HEK293T (cell line): ENCODE measurements at regions of chr18 and their contacts with region 1.

Region 1: GRCh38 chr18:4106407-4107033 is 348.6 kb downstream of the DLGAP1 start:
- DNase-seq: peak; percentile 26

Region 2: DNA sequence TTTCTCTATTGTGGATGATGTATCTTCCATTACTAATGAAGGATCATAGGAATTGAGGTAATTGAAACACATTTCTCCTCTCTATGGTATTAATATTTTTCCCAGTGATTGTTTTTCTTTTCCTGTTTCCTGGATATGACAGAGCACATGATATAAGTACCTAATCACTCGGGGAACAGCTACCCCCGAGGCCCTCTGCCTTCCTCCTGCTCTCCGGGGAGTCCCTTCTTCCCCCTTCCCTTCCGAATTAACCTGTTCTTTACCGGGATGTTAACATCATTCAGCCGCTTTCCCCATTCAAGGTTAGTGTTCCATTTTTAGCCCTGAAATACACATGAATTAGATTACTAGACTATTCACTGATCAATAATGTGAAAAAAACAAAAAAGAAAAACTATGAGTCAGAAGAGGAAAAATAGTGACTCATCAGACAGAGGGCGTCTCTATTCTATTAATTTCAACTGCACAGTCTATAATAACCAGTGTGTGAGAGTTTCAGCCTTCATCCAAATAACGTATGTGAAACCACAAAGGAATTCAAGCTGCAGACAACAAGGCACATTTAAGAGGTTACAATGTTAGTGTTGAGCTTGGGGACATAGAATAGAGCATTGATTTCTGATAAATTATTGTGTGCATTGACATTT is 102.2 kb before region 1 on chr18:
- CTCF ChIA-PET with region 1: no interaction called
- POLR2A ChIA-PET with region 1: no interaction called
- DNase-seq: no peak

Region 3: GRCh38 chr18:5057386-5058348 is 951.1 kb after region 1 on chr18:
- CTCF ChIA-PET with region 1: interaction called, 10 read pairs
- POLR2A ChIA-PET with region 1: no interaction called
- DNase-seq: peak; percentile 54